Right cardiac atrium (tissue), 5 donors: ENCODE measurements at regions of chr9 and their contacts with region 1.

Region 1: DNA sequence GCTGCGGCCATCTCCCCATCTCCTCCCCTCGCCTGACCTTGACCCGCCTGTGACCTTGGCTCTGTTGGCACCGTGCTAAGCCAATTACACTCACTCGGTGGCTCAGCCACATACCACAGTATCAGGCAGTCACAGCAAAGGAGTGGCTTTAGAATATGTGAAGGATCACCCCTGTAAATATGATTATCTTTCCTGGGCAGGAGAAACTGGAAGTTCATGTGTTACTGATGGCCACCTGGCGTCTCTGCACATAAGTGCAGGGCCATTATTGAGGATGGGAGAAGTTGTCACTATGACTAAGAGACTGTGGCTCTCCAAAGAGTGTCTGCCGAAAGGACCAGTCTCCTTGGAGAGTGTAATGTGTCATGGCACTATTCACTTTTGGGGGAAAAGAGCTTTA is 116.9 kb upstream of the S1PR3 start:
- DNase-seq: no peak
- ATAC-seq: peak; percentile 26 to 30
- H3K4me3 ChIP-seq: no peak overlapping the region
- H3K27ac ChIP-seq: no peak overlapping the region
- H3K4me1 ChIP-seq: peaks cover 8% of the 10 kb centered on the region
- H3K27me3 ChIP-seq: no peaks in the 10 kb centered on the region

Region 2: GRCh38 chr9:88757406-88758006 is 116.9 kb before region 1 on chr9:
- intact Hi-C with region 1: no loop called
- DNase-seq: no peak
- ATAC-seq: peak in 1 of 2 donors; percentile 59
- H3K4me3 ChIP-seq: no peak overlapping the region
- H3K27ac ChIP-seq: no peak overlapping the region
- H3K4me1 ChIP-seq: peaks cover 1% of the 10 kb centered on the region
- H3K27me3 ChIP-seq: no peaks in the 10 kb centered on the region

Region 3: GRCh38 chr9:88781628-88782391 is 92.6 kb before region 1 on chr9:
- intact Hi-C with region 1: loop called in 1 of 4 experiments (anchors 5 kb)
- DNase-seq: peak; percentile 73 to 81 (median 75)
- ATAC-seq: peak; percentile 82 to 83
- H3K4me3 ChIP-seq: no peak overlapping the region
- H3K27ac ChIP-seq: peak overlapping the region; percentile 83
- H3K4me1 ChIP-seq: peaks cover 21% of the 10 kb centered on the region
- H3K27me3 ChIP-seq: no peaks in the 10 kb centered on the region

Region 4: DNA sequence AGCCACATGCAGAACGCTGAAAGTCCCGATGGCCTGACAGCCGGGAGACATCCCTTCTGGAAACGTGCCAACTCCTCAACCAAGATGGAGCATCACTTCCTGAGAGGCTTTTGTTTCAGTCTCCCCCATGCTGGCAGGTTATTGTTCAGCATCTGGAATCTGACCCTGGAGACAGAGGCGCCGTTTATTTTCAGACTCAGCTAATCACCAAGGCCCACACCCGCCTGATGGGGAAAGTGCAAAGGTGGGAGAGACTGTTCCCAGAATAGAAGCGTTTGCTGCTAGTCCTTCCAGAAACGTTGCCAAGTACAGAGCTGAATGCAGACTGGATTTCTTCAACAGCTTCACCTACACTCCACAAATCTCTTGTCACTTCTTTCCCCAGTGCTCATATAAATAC is 75.0 kb after region 1 on chr9:
- intact Hi-C with region 1: loop called in 1 of 4 experiments (anchors 10 kb)
- DNase-seq: peak; percentile 41 to 72 (median 67)
- ATAC-seq: peak; percentile 79 to 89
- H3K4me3 ChIP-seq: no peak overlapping the region
- H3K27ac ChIP-seq: peak overlapping the region; percentile 69
- H3K4me1 ChIP-seq: peaks cover 19% of the 10 kb centered on the region
- H3K27me3 ChIP-seq: no peaks in the 10 kb centered on the region

Region 5: DNA sequence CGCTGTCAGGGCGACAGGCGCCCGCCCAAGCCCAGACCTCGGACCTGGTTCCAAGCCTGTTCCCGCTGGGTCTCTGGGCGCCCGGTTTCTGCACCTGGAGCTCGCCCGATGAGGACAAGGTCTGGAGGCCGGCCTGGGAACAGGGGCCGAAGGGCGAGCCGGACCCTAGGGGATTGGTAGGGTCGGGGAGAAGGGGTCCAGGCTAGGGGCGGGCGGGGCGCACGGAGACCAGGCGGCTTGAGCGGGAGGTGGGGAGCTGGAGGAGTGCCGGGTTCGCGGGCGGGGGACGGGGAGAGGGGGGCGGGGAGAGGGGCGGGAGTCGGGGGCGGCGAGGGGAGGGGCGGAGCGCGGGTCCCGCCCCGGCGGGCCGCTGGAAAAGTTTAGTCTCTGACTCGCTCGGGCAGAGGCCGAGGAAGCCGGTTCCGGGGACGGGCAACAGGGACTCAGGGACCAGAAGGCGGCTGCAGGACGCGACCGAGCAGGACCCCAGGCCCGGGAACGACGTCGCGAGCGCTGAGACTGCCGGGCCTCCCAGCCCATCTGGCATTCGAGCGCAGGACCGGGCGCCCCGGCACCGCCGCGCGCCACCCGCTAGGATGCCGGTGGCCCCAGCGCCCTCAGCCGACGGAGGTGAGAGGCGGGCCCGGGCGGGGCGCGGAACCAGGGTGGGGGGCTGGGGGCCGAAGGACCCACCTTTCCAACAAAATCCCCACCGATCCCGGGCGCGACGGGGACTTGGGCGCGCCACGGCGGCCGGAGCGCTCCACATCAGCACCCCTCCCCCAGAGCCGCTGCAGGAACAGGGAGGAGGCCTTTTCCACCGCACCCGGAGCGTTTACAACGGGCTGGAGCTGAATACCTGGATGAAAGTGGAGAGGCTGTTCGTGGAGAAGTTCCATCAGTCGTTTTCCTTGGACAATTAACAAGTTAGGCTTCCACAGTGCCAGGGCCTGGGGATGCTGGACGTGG is 117.0 kb after region 1 on chr9 and contains the start of gene S1PR3:
- intact Hi-C with region 1: loop called in 1 of 4 experiments (anchors 10 kb)
- DNase-seq: peak; percentile 78 to 89 (median 87)
- ATAC-seq: peak; percentile 86
- H3K4me3 ChIP-seq: peak within 1 kb of the TSS; percentile 83
- H3K27ac ChIP-seq: peak within 1 kb of the TSS; percentile 77
- H3K4me1 ChIP-seq: peaks cover 5% of the 10 kb centered on the region
- H3K27me3 ChIP-seq: no peaks in the 10 kb centered on the region
- total RNA-seq, gene S1PR3: 37.2 to 51.6 (median 38.3) TPM